OCI-LY7 (cell line): ENCODE measurements at regions of chr16 and their contacts with region 1.

Region 1: GRCh38 chr16:11407047-11407982 is 62.1 kb downstream of the RMI2 start:
- DNase-seq: peak; percentile 79
- H3K4me3 ChIP-seq: no peak overlapping the region
- H3K27ac ChIP-seq: no peak overlapping the region
- H3K4me1 ChIP-seq: peaks cover 5% of the 10 kb centered on the region
- CTCF ChIP-seq: peak; percentile 96

Region 2: GRCh38 chr16:11446566-11447119 is 39.3 kb after region 1 on chr16:
- CTCF ChIA-PET with region 1: no interaction called
- POLR2A ChIA-PET with region 1: no interaction called
- intact Hi-C with region 1: no loop called
- DNase-seq: no peak
- H3K4me3 ChIP-seq: no peak overlapping the region
- H3K27ac ChIP-seq: no peak overlapping the region
- H3K4me1 ChIP-seq: no peaks in the 10 kb centered on the region
- CTCF ChIP-seq: no peak

Region 3: DNA sequence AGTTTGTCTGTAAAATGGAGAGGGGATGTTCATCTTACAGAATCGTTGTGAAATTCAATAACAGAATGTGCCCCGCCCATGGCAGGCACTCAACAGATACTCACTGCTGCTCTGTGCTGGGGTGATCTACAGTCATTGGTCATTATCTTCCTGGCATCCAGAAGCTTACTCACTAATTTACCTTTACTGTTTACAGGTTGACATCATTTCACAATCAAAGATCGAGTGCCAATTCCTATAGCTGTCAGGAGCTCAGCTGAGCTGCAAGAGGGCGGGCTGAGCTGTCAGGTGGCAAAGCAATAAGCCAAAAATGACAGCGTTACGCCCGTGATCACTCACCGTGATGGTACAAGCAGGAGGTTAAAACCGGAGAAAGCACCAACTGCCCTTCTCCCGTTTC is 128.2 kb after region 1 on chr16:
- CTCF ChIA-PET with region 1: no interaction called
- POLR2A ChIA-PET with region 1: no interaction called
- intact Hi-C with region 1: loop called (anchors 2 kb)
- DNase-seq: no peak
- H3K4me3 ChIP-seq: no peak overlapping the region
- H3K27ac ChIP-seq: no peak overlapping the region
- H3K4me1 ChIP-seq: peaks cover 7% of the 10 kb centered on the region
- CTCF ChIP-seq: no peak

Region 4: DNA sequence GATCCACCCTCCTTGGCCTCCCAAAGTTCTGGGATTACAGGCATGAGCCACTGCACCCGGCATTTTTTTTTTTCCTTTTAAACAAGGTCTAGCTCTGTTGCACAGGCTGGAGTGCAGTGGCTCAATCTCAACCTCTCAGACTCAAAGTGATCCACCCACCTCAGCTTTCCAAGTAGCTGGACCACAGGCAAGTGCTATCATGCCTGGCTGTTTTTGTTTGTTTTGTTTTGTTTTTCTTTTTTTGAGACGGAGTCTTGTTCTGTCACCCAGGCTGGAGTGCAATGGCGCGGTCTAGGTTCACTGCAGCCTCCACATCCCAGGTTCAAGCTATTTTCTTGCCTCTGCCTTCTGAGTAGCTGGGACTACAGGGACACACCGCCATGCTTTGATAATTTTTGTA is 408.8 kb after region 1 on chr16:
- CTCF ChIA-PET with region 1: no interaction called
- POLR2A ChIA-PET with region 1: no interaction called
- intact Hi-C with region 1: loop called (anchors 1 kb)
- DNase-seq: no peak
- H3K4me3 ChIP-seq: no peak overlapping the region
- H3K27ac ChIP-seq: no peak overlapping the region
- H3K4me1 ChIP-seq: peaks cover 11% of the 10 kb centered on the region
- CTCF ChIP-seq: no peak

Region 5: GRCh38 chr16:12558641-12559040 is 1151.3 kb after region 1 on chr16:
- CTCF ChIA-PET with region 1: no interaction called
- POLR2A ChIA-PET with region 1: no interaction called
- intact Hi-C with region 1: no loop called
- DNase-seq: peak; percentile 43
- H3K4me3 ChIP-seq: peak overlapping the region; percentile 23
- H3K27ac ChIP-seq: peak overlapping the region; percentile 68
- H3K4me1 ChIP-seq: peaks cover 59% of the 10 kb centered on the region
- CTCF ChIP-seq: peak; percentile 63